ENCODE measurements at regions of chr15 and their contacts with region 1.

Region 1: DNA sequence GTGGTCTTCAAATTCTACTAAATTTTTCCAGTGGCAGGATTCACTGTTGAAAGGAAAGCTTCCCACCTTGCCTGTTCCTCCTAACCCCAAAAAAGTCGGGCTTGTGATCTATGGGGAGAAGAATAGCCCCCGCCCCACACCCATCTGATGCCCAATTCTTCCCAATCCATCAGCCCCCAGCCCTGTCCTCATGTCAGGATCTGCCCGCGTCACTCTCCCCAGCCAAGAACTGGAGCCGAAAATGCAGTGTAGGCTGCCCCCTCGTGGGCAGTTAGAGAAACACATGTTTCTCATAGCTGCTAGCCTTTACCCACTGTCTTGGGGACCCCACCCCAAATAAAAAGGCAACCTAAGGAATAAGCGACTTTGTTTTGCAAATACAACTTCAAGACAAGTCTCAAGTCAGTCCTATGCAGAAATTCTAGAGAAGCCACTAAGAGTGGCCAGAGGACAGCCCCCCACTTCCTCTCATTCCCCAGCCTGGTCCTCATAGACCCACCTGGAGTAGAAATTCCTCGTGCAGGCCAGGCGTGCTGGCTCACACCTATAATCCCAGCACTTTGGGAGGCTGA is 13.0 kb upstream of the CSK start:
- DNase-seq: peak; percentile 71
- H3K4me3 Mint-ChIP-seq: no peak overlapping the region
- H3K27ac Mint-ChIP-seq: no peak overlapping the region
- H3K4me1 Mint-ChIP-seq: peaks cover 19% of the 10 kb centered on the region
- H3K27me3 Mint-ChIP-seq: peaks cover 8% of the 10 kb centered on the region

Region 2: GRCh38 chr15:74648166-74648842 is 120.6 kb before region 1 on chr15:
- CTCF ChIA-PET with region 1: interaction called, 10 read pairs
- POLR2A ChIA-PET with region 1: no interaction called
- DNase-seq: no peak
- H3K4me3 Mint-ChIP-seq: no peak overlapping the region
- H3K27ac Mint-ChIP-seq: no peak overlapping the region
- H3K4me1 Mint-ChIP-seq: peaks cover 2% of the 10 kb centered on the region
- H3K27me3 Mint-ChIP-seq: no peaks in the 10 kb centered on the region

Region 3: GRCh38 chr15:74725845-74726773 is 42.7 kb before region 1 on chr15:
- CTCF ChIA-PET with region 1: interaction called, 18 read pairs
- POLR2A ChIA-PET with region 1: no interaction called
- DNase-seq: peak; percentile 71
- H3K4me3 Mint-ChIP-seq: peak overlapping the region; percentile 69
- H3K27ac Mint-ChIP-seq: peak overlapping the region; percentile 82
- H3K4me1 Mint-ChIP-seq: peaks cover 20% of the 10 kb centered on the region
- H3K27me3 Mint-ChIP-seq: peaks cover 16% of the 10 kb centered on the region

Region 4: DNA sequence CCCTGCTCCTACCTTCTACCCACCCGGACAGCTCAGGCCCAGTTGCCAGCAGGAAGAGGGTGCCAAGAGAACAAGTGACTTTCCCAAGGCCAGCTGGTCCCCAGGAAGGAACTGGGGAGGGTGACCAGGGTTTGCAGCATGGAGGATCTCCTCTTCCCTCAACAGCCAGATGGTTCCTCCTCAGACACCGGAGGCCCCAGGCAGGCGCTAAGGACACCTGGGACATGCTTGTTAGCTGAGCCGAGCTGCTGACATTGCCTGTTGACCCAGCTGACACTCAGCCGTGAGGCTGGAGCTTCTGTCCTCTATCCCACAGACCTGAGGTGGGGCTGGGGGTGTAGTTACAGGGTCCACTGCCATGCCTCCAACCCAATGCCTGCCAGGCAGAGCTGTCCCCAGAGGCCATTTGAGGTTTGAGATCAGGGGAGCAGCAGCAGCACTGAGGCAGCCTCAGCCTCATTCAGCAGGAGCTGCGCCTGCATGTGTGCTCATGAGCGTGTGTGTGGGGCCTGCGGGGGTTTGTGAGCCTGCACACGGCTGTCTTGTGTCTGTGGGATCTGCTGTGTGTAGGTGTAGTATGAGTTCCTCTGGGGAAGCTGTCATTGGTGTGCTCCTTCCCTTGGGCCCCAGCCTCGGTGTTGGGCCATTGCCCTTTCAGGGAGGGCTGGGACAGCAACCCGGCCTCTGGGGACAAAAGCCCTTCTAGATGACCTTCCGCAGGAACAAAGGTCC is 64.7 kb after region 1 on chr15:
- CTCF ChIA-PET with region 1: interaction called, 12 read pairs
- POLR2A ChIA-PET with region 1: interaction called, 4 read pairs
- DNase-seq: no peak
- H3K4me3 Mint-ChIP-seq: no peak overlapping the region
- H3K27ac Mint-ChIP-seq: no peak overlapping the region
- H3K4me1 Mint-ChIP-seq: peaks cover 14% of the 10 kb centered on the region
- H3K27me3 Mint-ChIP-seq: no peaks in the 10 kb centered on the region

Measured in activated CD4-positive, alpha-beta memory T cell treated with anti-CD3 and anti-CD28 coated beads, Interleukin-2, amount 10 ng/mL, durations not matched to agents 7 days and 5 days (primary cell).